ENCODE measurements at regions of chrX and their contacts with region 1.

Region 1: DNA sequence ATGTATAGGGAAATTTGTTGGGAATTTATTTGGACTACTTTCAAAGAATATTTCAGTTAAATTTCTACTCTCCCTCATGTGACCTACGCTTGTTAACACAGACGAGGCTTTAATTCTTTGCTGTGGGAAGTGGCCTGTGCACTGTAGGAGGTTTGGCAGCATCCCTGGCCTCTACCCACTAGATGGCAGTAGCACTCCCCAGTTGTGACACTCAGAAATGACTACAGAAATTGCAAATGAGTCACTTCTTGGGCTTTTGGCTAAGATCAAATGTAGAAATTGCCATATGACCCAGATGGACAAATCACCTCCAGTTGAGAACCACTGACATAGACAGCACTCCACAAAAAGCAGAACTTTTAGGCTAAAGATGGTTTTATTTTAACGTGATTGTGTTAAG is 22.1 kb downstream of the PIR start:
- DNase-seq: peak; percentile 42 to 76 (median 64)
- ATAC-seq: peak; percentile 77 to 80
- H3K4me3 ChIP-seq: no peak overlapping the region
- H3K27ac ChIP-seq: no peak overlapping the region
- H3K4me1 ChIP-seq: peaks cover 2% of the 10 kb centered on the region
- H3K27me3 ChIP-seq: no peaks in the 10 kb centered on the region

Region 2: DNA sequence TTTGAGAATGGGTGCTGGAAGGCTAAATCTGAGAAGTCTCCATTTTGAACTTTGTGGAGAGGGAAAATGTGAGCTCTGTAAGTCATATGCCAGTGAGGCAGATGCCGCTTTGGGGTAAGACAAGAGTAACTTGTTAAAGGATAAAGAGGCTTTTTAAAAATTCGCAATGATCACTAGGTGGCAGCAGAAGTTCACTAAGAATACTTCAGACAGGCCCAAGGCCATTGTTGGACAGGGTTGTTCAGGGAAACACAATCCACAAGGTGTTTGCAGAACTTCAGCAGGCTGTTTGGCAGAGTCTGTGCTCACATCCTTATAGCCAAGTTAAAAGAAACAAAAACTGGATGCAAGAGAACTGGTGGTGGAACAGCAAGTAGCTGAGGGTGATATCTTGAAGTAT is 122.0 kb before region 1 on chrX:
- intact Hi-C with region 1: loop called (anchors 5 to 10 kb)
- DNase-seq: no peak
- ATAC-seq: peak; percentile 83 to 87
- H3K4me3 ChIP-seq: no peak overlapping the region
- H3K27ac ChIP-seq: no peak overlapping the region
- H3K4me1 ChIP-seq: peaks cover 1% of the 10 kb centered on the region
- H3K27me3 ChIP-seq: no peaks in the 10 kb centered on the region

Region 3: GRCh38 chrX:15356444-15356843 is 114.6 kb before region 1 on chrX:
- intact Hi-C with region 1: loop called in 1 of 4 experiments (anchors 10 kb)
- DNase-seq: no peak
- ATAC-seq: peak in 1 of 2 donors; percentile 61
- H3K4me3 ChIP-seq: no peak overlapping the region
- H3K27ac ChIP-seq: no peak overlapping the region
- H3K4me1 ChIP-seq: no peaks in the 10 kb centered on the region
- H3K27me3 ChIP-seq: no peaks in the 10 kb centered on the region

Region 4: GRCh38 chrX:15438332-15438731 is 32.7 kb before region 1 on chrX:
- intact Hi-C with region 1: no loop called
- DNase-seq: no peak
- ATAC-seq: no peak
- H3K4me3 ChIP-seq: no peak overlapping the region
- H3K27ac ChIP-seq: no peak overlapping the region
- H3K4me1 ChIP-seq: no peaks in the 10 kb centered on the region
- H3K27me3 ChIP-seq: no peaks in the 10 kb centered on the region

Region 5: GRCh38 chrX:15664487-15665444 is 193.8 kb after region 1 on chrX and contains the start of gene CLTRN:
- intact Hi-C with region 1: no loop called
- DNase-seq: no peak
- ATAC-seq: no peak
- H3K4me3 ChIP-seq: no peak within 1 kb of the TSS
- H3K27ac ChIP-seq: no peak within 1 kb of the TSS
- H3K4me1 ChIP-seq: no peaks in the 10 kb centered on the region
- H3K27me3 ChIP-seq: no peaks in the 10 kb centered on the region
- total RNA-seq, gene CLTRN: 0.29 to 0.97 (median 0.36) TPM in 3 of 4 donors, not detected in the other